Colonic mucosa (tissue), 4 donors: ENCODE measurements at regions of chr6 and their contacts with region 1.

Region 1: DNA sequence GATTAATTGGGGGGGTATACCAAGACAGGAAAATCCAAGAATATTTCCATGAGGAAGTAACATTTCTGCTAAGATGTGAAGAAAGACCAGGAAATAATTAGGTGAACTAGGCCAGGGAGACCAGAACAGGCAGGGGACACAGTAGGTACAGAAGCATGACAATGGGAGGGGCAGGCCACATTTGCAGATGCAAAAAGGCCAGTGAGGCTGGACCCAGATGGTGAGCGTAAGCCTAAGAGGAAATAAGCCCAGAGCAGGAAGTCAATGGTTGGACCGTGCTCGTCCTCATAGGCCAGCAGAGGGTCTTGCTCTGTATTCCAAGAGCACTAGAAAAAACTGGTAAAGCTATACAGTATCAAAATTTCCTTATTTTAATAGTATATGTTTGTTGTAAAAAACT is 9.4 kb downstream of the CEP162 start:
- DNase-seq: no peak
- H3K4me3 ChIP-seq: no peak overlapping the region
- H3K27ac ChIP-seq: no peak overlapping the region
- H3K4me1 ChIP-seq: no peaks in the 10 kb centered on the region
- H3K27me3 ChIP-seq: no peaks in the 10 kb centered on the region
- CTCF ChIP-seq: no peak

Region 2: DNA sequence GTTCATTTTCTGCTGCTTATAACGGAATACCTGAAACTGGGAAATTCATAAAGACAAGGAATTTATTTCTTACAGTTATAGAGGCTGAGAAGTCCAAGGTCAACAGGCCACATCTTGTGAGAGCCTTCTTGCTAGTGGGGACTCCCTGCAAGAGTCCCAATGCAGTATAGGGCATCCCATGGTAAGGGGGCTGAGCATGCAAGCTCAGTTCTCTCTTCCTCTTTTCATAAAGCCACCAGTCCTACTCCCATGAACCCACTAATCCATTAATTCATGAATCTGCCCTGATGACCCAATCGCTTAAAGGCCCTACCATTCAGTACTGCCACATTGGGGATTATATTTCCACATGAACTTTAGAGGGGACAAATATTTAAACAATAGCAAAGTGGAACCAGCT is 332.1 kb before region 1 on chr6:
- intact Hi-C with region 1: loop called (anchors 5 kb)
- DNase-seq: no peak
- H3K4me3 ChIP-seq: no peak overlapping the region
- H3K27ac ChIP-seq: no peak overlapping the region
- H3K4me1 ChIP-seq: no peaks in the 10 kb centered on the region
- H3K27me3 ChIP-seq: no peaks in the 10 kb centered on the region
- CTCF ChIP-seq: no peak

Region 3: GRCh38 chr6:83952830-83953229 is 265.3 kb before region 1 on chr6:
- intact Hi-C with region 1: no loop called
- DNase-seq: no peak
- H3K4me3 ChIP-seq: no peak overlapping the region
- H3K27ac ChIP-seq: no peak overlapping the region
- H3K4me1 ChIP-seq: no peaks in the 10 kb centered on the region
- H3K27me3 ChIP-seq: no peaks in the 10 kb centered on the region
- CTCF ChIP-seq: no peak

Region 4: DNA sequence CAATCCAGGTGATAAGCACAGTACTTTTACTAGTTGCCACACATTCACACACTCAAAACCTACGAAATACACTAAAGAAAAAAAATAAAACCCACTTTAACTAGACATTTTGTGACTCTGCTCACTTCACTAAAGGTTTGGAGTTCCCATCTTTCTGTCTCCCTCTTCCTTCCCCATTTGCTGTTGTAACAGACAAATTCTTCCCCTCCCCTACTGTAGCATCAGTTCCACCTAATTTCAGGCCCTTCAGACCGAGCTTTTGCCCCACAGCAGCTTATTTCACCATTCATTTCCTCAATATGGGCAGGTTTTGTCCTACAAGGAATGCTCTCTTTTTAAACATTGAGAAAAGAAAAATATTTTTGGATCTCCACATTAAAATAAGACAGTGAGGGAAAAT is 215.9 kb before region 1 on chr6:
- intact Hi-C with region 1: no loop called
- DNase-seq: no peak
- H3K4me3 ChIP-seq: no peak overlapping the region
- H3K27ac ChIP-seq: no peak overlapping the region
- H3K4me1 ChIP-seq: no peaks in the 10 kb centered on the region
- H3K27me3 ChIP-seq: no peaks in the 10 kb centered on the region
- CTCF ChIP-seq: no peak

Region 5: DNA sequence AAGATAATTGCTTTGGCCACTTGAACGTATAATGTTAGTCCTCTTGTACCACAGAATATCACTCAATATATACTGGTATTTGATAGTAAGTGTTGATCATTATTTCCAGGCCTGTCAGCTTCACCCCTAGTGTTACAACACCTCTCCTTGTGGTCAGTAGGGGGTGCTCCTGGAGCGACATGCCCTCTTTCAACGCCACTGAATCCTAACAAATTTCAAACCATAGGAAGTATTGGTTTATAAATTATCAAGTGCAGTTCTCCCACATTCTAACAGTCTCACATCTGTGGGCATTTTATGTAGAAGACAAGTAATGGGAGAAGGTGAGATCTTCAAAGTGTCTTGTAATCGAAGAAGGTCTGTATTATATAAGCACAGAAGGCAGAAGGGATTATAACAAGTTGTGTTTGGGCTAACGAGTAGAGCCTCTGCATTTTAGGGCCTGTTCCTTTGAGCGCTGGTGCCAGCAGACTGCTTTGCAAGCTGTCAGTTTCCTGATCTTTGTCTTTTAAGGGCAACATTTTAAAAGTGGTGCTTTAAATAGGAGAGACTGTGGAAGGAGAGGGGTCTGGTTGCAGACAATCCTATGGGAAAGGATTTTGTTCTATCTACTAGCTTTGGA is 66.4 kb after region 1 on chr6:
- intact Hi-C with region 1: no loop called
- DNase-seq: no peak
- H3K4me3 ChIP-seq: no peak overlapping the region
- H3K27ac ChIP-seq: no peak overlapping the region
- H3K4me1 ChIP-seq: no peaks in the 10 kb centered on the region
- H3K27me3 ChIP-seq: no peaks in the 10 kb centered on the region
- CTCF ChIP-seq: no peak